ENCODE measurements at regions of chr15 and their contacts with region 1.

Region 1: GRCh38 chr15:40782580-40783227 is 12.9 kb downstream of the C15orf62 start:
- DNase-seq: peak; percentile 70 to 88 (median 78)
- ATAC-seq: peak; percentile 94
- H3K4me3 ChIP-seq: no peak overlapping the region
- H3K4me3 Mint-ChIP-seq: no peak overlapping the region
- H3K27ac ChIP-seq: no peak overlapping the region
- H3K27ac Mint-ChIP-seq: peak overlapping the region; percentile 1
- H3K4me1 ChIP-seq: peaks cover 9% of the 10 kb centered on the region
- H3K4me1 Mint-ChIP-seq: peaks cover 32% of the 10 kb centered on the region
- H3K27me3 ChIP-seq: no peaks in the 10 kb centered on the region
- H3K27me3 Mint-ChIP-seq: no peaks in the 10 kb centered on the region
- CTCF ChIP-seq: peak; percentile 82

Region 2: DNA sequence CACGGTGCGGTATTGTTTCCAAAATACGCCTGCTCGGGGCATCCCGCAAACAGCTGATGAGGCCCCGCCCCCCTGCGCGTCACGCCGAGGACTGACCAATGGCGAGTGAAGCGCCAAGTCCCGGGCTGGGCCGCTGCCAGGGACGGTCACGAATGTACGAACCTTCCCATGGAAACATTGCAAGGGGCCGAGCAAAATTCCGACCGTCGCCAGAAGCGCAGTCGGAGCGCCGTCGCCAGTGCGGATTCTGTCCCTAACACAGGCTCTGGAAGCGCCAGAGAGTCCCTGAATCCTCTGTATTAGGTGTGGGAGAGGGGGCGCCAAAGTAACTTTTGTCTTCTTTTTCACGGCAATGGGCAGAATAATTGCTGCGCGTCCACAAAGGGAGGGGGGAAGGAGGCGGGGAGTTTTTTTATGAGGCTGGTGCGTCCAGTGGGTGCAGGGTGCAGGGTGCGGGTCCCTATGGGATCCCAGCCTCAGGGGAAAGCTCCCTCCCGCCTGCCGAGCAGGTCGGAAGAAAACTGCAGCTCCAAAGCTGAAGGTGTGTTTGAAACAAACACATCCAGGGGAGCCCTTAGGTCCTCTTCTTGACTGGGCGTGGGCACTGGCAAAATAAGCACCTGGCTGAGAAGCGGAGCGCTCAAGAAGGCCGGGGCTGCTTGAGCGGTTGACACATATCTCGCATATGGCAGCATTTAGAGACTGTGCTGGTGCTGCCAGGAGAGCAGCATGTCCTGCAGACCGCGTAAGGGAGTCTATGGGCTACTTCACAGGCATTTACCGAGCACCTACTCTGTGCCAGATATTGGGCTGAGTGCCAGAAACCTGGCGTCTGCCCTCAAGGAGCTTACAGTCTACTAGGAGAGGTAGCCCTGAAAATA is 673.6 kb before region 1 on chr15 and contains the start of gene BMF:
- CTCF ChIA-PET with region 1: no interaction called
- POLR2A ChIA-PET with region 1: no interaction called
- intact Hi-C with region 1: no loop called
- DNase-seq: peak; percentile 93 to 99 (median 97)
- ATAC-seq: peak; percentile 80
- H3K4me3 ChIP-seq: peak within 1 kb of the TSS; percentile 88
- H3K4me3 Mint-ChIP-seq: peak within 1 kb of the TSS; percentile 89
- H3K27ac ChIP-seq: peak within 1 kb of the TSS in 1 of 2 donors; percentile 27
- H3K27ac Mint-ChIP-seq: peak within 1 kb of the TSS; percentile 58
- H3K4me1 ChIP-seq: peaks cover 51% of the 10 kb centered on the region
- H3K4me1 Mint-ChIP-seq: peaks cover 55% of the 10 kb centered on the region
- H3K27me3 ChIP-seq: no peaks in the 10 kb centered on the region
- H3K27me3 Mint-ChIP-seq: no peaks in the 10 kb centered on the region
- CTCF ChIP-seq: peak; percentile 38
- total RNA-seq, gene BMF: 13.5 to 13.9 TPM

Region 3: DNA sequence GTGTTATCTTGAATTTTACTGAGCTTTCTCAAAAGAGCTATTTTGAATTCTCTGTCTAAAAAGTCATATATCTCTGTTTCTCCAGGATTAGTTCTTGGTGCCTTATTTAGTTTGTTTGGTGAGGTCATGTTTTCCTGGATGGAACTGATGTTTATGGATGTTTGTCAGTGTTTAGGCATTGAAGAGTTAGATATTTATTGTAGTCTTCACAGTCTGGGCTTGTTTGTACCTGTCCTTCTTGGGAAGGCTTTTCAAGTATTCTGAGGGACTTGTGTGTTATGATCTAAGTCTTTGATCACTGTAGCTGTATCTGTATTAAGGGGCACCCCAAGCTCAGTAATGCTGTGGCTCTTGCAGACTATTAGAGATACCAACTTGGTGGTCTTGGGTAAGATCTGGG is 98.3 kb before region 1 on chr15:
- CTCF ChIA-PET with region 1: interaction called, 15 read pairs
- POLR2A ChIA-PET with region 1: no interaction called
- intact Hi-C with region 1: loop called (anchors 1 to 5 kb)
- DNase-seq: no peak
- ATAC-seq: no peak
- H3K4me3 ChIP-seq: no peak overlapping the region
- H3K4me3 Mint-ChIP-seq: no peak overlapping the region
- H3K27ac ChIP-seq: no peak overlapping the region
- H3K27ac Mint-ChIP-seq: no peak overlapping the region
- H3K4me1 ChIP-seq: peaks cover under 1% of the 10 kb centered on the region
- H3K4me1 Mint-ChIP-seq: no peaks in the 10 kb centered on the region
- H3K27me3 ChIP-seq: no peaks in the 10 kb centered on the region
- H3K27me3 Mint-ChIP-seq: no peaks in the 10 kb centered on the region
- CTCF ChIP-seq: no peak

Region 4: DNA sequence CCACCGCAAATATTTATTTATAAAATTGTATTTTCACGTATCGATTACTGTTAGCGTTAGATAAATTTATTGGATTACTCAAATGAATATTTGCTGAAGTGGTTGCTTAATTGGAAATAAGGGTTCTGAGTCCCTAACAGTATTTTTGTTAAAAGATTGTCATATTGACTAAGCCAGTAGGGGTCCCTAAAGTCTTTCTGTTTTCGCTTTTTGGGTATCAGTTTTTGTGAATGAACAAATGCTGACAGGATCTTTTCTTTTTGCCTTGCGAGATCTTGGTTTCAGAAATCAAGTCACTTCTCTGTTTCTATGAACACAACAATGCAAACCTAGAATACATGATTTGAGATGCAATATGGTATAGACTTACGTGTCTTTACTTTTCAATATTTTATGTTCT is 80.6 kb before region 1 on chr15:
- CTCF ChIA-PET with region 1: interaction called, 9 read pairs
- POLR2A ChIA-PET with region 1: interaction called, 3 read pairs
- intact Hi-C with region 1: loop called in 1 of 2 experiments (anchors 1 kb)
- DNase-seq: peak in 3 of 14 experiments; percentile 39 to 48 (median 45)
- ATAC-seq: no peak
- H3K4me3 ChIP-seq: no peak overlapping the region
- H3K4me3 Mint-ChIP-seq: no peak overlapping the region
- H3K27ac ChIP-seq: no peak overlapping the region
- H3K27ac Mint-ChIP-seq: no peak overlapping the region
- H3K4me1 ChIP-seq: no peaks in the 10 kb centered on the region
- H3K4me1 Mint-ChIP-seq: no peaks in the 10 kb centered on the region
- H3K27me3 ChIP-seq: no peaks in the 10 kb centered on the region
- H3K27me3 Mint-ChIP-seq: no peaks in the 10 kb centered on the region
- CTCF ChIP-seq: peak; percentile 16

Region 5: GRCh38 chr15:40763801-40764732 is 18.6 kb before region 1 on chr15 and contains the start of gene GCHFR:
- CTCF ChIA-PET with region 1: interaction called, 19 read pairs
- POLR2A ChIA-PET with region 1: interaction called, 7 read pairs
- intact Hi-C with region 1: no loop called
- DNase-seq: peak; percentile 35 to 87 (median 63)
- ATAC-seq: peak; percentile 48
- H3K4me3 ChIP-seq: peak within 1 kb of the TSS; percentile 98
- H3K4me3 Mint-ChIP-seq: peak within 1 kb of the TSS; percentile 89
- H3K27ac ChIP-seq: peak within 1 kb of the TSS; percentile 60 to 71
- H3K27ac Mint-ChIP-seq: peak within 1 kb of the TSS; percentile 90
- H3K4me1 ChIP-seq: peaks cover 40% of the 10 kb centered on the region
- H3K4me1 Mint-ChIP-seq: peaks cover 30% of the 10 kb centered on the region
- H3K27me3 ChIP-seq: no peaks in the 10 kb centered on the region
- H3K27me3 Mint-ChIP-seq: no peaks in the 10 kb centered on the region
- CTCF ChIP-seq: peak; percentile 45
- total RNA-seq, gene GCHFR: 13.5 to 14.8 TPM

Region 6: GRCh38 chr15:40807028-40807887 is 24.6 kb after region 1 on chr15 and contains the starts of genes DNAJC17 and ZFYVE19:
- CTCF ChIA-PET with region 1: interaction called, 3 read pairs
- POLR2A ChIA-PET with region 1: interaction called, 11 read pairs
- intact Hi-C with region 1: no loop called
- DNase-seq: peak; percentile 86 to 97 (median 92)
- ATAC-seq: peak; percentile 97
- H3K4me3 ChIP-seq: peak within 1 kb of the TSS; percentile 80
- H3K4me3 Mint-ChIP-seq: peak within 1 kb of the TSS; percentile 96
- H3K27ac ChIP-seq: peak within 1 kb of the TSS; percentile 90 to 93
- H3K27ac Mint-ChIP-seq: peak within 1 kb of the TSS; percentile 91
- H3K4me1 ChIP-seq: peaks cover 30% of the 10 kb centered on the region
- H3K4me1 Mint-ChIP-seq: peaks cover 23% of the 10 kb centered on the region
- H3K27me3 ChIP-seq: no peaks in the 10 kb centered on the region
- H3K27me3 Mint-ChIP-seq: no peaks in the 10 kb centered on the region
- CTCF ChIP-seq: no peak
- total RNA-seq, gene DNAJC17: 14.4 to 17.9 TPM
- total RNA-seq, gene ZFYVE19: 12.0 to 13.0 TPM

Region 7: DNA sequence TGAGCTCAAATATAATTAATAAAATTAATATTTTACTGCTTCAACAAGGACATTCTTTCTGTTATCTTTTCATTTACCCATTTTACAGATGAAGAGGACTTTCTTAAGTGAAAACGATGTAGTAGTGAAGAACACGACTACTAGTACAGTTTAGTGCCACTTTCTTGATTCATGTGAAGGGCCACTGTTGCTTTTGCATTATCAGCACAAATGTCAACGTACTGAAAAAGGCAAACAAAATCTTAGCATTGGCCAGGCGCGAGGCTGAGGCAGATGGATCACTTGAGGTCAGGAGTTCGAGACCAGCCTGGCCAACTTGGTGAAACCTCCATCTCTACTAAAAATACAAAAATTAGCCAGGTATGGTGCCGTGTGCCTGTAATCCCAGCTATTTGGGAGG is 36.3 kb after region 1 on chr15:
- CTCF ChIA-PET with region 1: no interaction called
- POLR2A ChIA-PET with region 1: no interaction called
- intact Hi-C with region 1: no loop called
- DNase-seq: no peak
- ATAC-seq: no peak
- H3K4me3 ChIP-seq: no peak overlapping the region
- H3K4me3 Mint-ChIP-seq: no peak overlapping the region
- H3K27ac ChIP-seq: no peak overlapping the region
- H3K27ac Mint-ChIP-seq: no peak overlapping the region
- H3K4me1 ChIP-seq: no peaks in the 10 kb centered on the region
- H3K4me1 Mint-ChIP-seq: no peaks in the 10 kb centered on the region
- H3K27me3 ChIP-seq: no peaks in the 10 kb centered on the region
- H3K27me3 Mint-ChIP-seq: peaks cover 8% of the 10 kb centered on the region
- CTCF ChIP-seq: no peak

Region 8: DNA sequence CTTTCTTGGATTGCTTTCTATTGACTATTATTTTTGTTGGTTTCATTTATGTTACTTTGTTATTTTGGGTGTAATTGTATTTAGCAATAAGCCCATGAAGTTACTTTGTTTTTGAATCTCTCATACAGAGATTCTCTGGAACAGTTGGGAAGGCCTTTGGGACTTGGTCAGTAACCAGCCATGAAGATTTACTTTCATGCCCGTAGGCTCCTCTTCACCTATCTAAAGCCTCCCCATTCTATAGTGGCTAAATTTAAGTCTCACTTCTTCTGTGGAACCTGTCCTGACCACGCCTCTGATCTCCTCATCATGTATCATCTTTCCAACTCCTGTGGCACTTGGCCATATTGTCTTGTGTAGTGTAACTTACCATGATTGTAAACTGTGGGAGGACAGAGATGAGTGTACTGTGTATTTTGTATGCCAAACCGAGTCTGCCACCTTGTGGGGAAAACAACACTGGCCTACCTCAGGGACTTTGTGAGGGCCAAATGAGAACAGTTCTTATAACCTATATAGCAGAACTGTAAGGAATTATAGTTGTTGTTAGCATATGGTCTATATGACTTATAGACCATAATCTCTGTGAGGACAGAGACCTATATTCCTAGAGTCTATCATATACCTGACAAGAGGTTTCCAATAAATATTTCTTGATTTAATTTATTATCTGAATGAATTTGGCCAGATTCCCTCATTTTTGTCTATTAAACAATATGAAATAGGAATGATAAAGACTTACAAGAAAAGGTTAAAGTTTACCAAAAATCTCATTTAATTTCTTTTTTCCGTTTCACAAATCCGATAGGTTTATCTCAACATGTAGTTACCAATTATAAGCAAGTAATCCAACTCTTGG is 1867.7 kb after region 1 on chr15:
- CTCF ChIA-PET with region 1: no interaction called
- POLR2A ChIA-PET with region 1: no interaction called
- intact Hi-C with region 1: no loop called
- DNase-seq: peak; percentile 28 to 71 (median 40)
- ATAC-seq: peak; percentile 84
- H3K4me3 ChIP-seq: no peak overlapping the region
- H3K4me3 Mint-ChIP-seq: no peak overlapping the region
- H3K27ac ChIP-seq: no peak overlapping the region
- H3K27ac Mint-ChIP-seq: no peak overlapping the region
- H3K4me1 ChIP-seq: no peaks in the 10 kb centered on the region
- H3K4me1 Mint-ChIP-seq: no peaks in the 10 kb centered on the region
- H3K27me3 ChIP-seq: no peaks in the 10 kb centered on the region
- H3K27me3 Mint-ChIP-seq: no peaks in the 10 kb centered on the region
- CTCF ChIP-seq: peak; percentile 74

Measured in CD4-positive, alpha-beta T cell (primary cell).